ENCODE measurements at regions of chr1 and their contacts with region 1.

Region 1: DNA sequence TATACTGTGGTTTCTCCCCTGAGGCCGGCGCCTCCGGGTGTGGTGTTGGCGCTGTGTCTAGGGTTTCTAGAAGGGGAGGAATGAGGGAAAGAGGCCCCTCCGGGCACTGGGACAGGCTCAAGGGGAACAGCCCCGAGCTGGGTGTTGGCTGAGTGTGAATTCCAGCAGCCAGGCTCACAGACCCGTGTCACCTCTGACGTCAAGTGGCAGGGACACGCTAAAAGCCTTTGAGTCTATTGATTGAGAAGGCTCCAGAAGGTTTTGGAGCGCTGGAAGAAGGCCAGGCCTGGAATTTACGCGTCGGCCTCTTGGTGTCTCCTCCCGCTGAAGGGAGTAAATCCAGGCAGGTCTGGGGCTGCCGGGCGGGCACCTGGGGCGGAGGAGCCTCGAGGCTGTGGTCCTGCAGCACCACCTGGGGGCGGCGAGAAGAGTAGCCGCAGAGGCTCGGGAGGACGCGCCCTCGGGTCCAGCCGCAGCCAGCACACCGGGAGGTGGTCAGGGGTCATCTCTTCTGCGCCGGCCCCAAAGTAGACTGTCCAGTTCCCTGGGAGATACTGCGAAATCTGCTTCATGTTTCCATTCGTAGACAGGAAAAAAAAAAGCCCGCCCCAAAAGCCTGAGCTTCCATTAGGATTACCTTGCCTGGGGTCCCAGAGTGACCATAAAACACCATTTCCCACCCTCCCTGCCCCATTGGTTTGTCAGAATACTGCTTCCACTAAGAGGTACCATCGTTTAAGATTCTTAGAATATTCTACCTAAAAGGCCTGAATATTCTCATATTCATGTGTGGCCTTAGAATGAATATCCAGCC is 61.7 kb downstream of the TLR5 start:
- DNase-seq: no peak
- H3K4me3 ChIP-seq: peak overlapping the region; percentile 40 to 58 (median 44)
- H3K27ac ChIP-seq: peak overlapping the region; percentile 66 to 78 (median 74)
- H3K4me1 ChIP-seq: peaks cover 10 to 54% (median 54%) of the 10 kb centered on the region in 4 donors
- H3K27me3 ChIP-seq: no peaks in the 10 kb centered on the region
- CTCF ChIP-seq: peak; percentile 95 to 100 (median 96)
- EP300 ChIP-seq: no peak
- POLR2A ChIP-seq: no peak

Region 2: DNA sequence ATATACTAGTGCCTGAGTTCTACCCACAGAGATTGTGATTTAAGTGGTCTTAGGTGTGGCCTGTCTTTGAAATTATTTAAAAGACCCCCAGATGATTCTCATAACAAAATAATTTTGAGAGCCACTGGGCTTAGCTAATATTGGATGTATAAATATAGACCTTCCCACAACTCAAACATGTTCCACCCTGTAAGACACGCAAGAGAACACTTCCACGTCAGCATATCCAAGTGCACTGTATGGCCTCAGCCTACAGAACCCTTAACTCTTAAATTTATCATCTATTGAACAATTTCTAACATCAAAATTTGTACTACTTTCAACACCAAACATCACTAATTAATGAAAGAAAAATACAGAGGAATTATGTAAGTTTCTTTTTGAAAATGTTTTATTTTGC is 341.9 kb before region 1 on chr1:
- intact Hi-C with region 1: loop called (anchors 2 kb)
- DNase-seq: no peak
- H3K4me3 ChIP-seq: no peak overlapping the region
- H3K27ac ChIP-seq: no peak overlapping the region
- H3K4me1 ChIP-seq: peaks cover 0 to 5% (median 2%) of the 10 kb centered on the region in 4 donors
- H3K27me3 ChIP-seq: no peaks in the 10 kb centered on the region
- CTCF ChIP-seq: no peak
- EP300 ChIP-seq: no peak
- POLR2A ChIP-seq: no peak

Region 3: DNA sequence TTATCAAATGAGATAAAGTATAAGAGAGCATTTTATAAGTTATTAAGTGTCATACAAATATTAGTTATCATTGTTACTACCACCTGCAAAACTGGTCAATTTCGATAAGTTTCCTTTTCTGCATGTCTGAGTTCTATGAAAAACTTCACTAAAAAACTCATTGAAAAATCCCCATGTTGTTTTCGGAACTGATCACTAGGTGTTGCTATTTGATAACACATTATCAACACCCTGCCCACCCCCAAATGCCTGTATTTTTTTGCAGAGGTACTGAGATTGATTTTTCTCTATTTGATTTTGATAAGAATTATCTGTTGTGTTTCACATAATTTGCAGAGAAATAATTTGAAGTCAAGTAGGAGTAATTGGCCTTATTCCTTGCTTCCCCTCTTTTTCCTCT is 288.6 kb before region 1 on chr1:
- intact Hi-C with region 1: loop called (anchors 1 kb)
- DNase-seq: no peak
- H3K4me3 ChIP-seq: no peak overlapping the region
- H3K27ac ChIP-seq: no peak overlapping the region
- H3K4me1 ChIP-seq: peaks cover 0 to 12% (median 6%) of the 10 kb centered on the region in 4 donors
- H3K27me3 ChIP-seq: no peaks in the 10 kb centered on the region
- CTCF ChIP-seq: peak; percentile 59 to 71 (median 61)
- EP300 ChIP-seq: no peak
- POLR2A ChIP-seq: no peak

Region 4: GRCh38 chr1:223052931-223053330 is 28.5 kb before region 1 on chr1:
- intact Hi-C with region 1: no loop called
- DNase-seq: no peak
- H3K4me3 ChIP-seq: no peak overlapping the region
- H3K27ac ChIP-seq: no peak overlapping the region
- H3K4me1 ChIP-seq: peaks cover 0 to 10% (median 6%) of the 10 kb centered on the region in 4 donors
- H3K27me3 ChIP-seq: no peaks in the 10 kb centered on the region
- CTCF ChIP-seq: no peak
- EP300 ChIP-seq: no peak
- POLR2A ChIP-seq: no peak

Region 5: DNA sequence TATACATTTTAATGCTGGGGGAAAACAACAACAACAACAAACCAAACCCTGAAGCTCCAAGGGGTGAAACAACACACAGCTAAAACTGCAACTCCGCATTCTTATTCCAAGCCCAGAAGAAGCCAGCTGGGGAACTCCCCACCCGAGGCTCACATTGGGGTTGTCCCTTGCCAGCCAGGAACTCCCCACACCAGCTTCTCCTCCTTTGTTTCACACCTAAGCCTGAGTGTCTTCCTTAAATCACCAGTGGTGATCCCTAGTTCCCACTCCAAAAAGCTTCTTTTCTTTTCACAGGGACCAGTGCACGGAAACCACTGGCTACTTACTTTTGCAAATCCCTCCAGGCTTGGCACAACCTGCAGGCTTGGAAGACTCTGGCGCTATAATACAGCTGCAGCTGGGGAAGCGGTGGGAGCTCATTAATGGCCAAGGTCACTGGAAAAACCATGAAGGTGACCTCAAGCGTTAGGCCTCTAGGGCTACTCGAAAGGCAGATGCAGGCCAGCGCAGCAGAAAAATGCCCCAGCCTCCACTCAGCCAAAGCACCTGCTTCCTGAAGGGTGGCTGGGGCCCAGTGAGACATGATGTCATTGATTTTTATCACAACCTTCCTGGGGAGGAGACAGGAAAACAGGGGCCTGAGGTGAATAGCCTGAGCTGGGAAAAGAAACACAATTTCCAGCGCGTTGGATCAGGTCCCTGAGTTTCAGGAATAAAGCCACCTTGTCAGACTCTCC is 21.6 kb after region 1 on chr1:
- intact Hi-C with region 1: no loop called
- DNase-seq: no peak
- H3K4me3 ChIP-seq: no peak overlapping the region
- H3K27ac ChIP-seq: no peak overlapping the region
- H3K4me1 ChIP-seq: peaks cover 0 to 10% (median 0%) of the 10 kb centered on the region in 4 donors
- H3K27me3 ChIP-seq: no peaks in the 10 kb centered on the region
- CTCF ChIP-seq: no peak
- EP300 ChIP-seq: no peak
- POLR2A ChIP-seq: no peak

Region 6: GRCh38 chr1:223358826-223359225 is 277.4 kb after region 1 on chr1:
- intact Hi-C with region 1: no loop called
- DNase-seq: no peak
- H3K4me3 ChIP-seq: no peak overlapping the region
- H3K27ac ChIP-seq: no peak overlapping the region
- H3K4me1 ChIP-seq: peaks cover 8 to 15% (median 12%) of the 10 kb centered on the region in 4 donors
- H3K27me3 ChIP-seq: peaks cover 0 to 12% (median 0%) of the 10 kb centered on the region in 4 donors
- CTCF ChIP-seq: no peak
- EP300 ChIP-seq: no peak
- POLR2A ChIP-seq: no peak

Region 7: GRCh38 chr1:223411309-223411708 is 329.9 kb after region 1 on chr1:
- intact Hi-C with region 1: no loop called
- DNase-seq: no peak
- H3K4me3 ChIP-seq: no peak overlapping the region
- H3K27ac ChIP-seq: no peak overlapping the region
- H3K4me1 ChIP-seq: no peaks in the 10 kb centered on the region
- H3K27me3 ChIP-seq: no peaks in the 10 kb centered on the region
- CTCF ChIP-seq: no peak
- EP300 ChIP-seq: no peak
- POLR2A ChIP-seq: no peak